CD14-positive monocyte (primary cell): ENCODE measurements at regions of chr18 and their contacts with region 1.

Region 1: DNA sequence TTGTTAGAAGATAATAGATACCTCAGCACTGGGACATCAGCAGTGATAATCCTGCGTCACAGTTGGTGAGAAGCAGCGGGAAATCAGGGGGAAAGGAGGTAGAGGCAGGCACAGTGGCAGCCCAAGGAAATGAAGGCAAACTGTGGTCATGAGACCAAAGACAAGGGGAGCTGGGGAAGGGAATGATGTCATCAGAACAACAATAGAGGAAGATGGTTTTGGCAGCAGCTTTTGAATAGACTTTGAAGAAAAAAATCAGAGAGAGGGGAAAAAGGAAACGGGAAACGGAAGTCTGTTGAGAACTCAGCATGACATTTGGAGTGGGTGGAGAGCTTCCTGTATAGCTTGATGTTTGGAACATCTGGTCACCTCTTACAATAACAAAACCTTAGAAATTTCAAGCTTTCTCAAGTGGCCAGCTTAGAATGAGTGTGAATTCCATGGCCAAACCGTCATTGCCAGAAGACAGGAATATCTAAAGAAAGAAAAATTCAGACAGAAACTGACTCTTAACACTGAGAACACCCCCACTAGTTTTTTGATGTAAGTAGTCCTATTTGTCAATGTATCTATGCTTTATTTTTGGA is 18.4 kb upstream of the YES1 start:
- DNase-seq: peak; percentile 49 to 80 (median 61)
- H3K4me3 ChIP-seq: no peak overlapping the region
- H3K4me3 Mint-ChIP-seq: peak overlapping the region in 1 of 2 donors; percentile 85
- H3K27ac ChIP-seq: no peak overlapping the region
- H3K27ac Mint-ChIP-seq: peak overlapping the region in 1 of 7 donors; percentile 45
- H3K4me1 ChIP-seq: peaks cover 7 to 9% of the 10 kb centered on the region in 2 donors
- H3K4me1 Mint-ChIP-seq: peaks cover 10% of the 10 kb centered on the region
- H3K27me3 ChIP-seq: peaks cover 53 to 83% of the 10 kb centered on the region in 2 donors
- H3K27me3 Mint-ChIP-seq: peaks cover 83 to 89% (median 87%) of the 10 kb centered on the region in 3 donors
- CTCF ChIP-seq: no peak

Region 2: DNA sequence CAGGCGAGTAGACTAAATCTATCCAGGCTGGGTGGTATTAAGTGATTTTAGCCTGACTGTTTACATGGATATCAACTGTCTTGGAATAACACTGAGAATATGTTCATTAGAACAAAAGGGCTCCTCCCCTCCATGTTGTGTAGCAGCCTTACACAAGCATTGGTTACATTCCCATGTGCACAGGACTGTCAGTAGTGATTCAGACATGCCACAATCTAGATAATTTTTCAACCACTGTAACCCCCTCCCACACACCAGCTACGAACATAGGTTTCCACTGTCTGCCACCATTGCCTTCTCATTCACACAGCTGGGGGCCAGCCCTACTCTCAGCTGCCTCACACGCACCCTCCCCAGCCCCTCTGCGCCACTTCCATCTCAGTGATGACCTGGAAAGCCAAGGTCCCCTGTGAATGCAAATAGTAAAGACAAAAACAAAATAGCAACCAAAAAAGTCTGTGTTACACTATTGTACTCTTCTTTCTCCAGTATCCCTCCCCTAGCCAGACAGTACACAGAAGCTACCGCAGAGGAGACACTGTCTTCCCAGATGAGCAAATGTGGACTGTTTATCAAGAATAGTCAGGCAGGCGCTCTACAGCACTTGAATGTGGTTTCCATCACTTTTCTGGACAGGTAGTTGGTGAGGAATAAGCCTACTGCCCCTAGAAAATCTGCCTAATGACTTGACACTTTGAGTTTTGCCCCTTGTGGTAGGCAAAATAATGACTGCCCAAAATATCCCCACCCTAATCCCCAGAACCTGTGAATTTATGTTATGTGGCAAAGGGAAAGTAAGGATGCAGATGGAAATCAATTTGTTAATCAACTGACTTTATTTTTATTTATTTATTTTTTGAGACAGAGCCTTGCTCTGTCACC is 200.9 kb before region 1 on chr18:
- intact Hi-C with region 1: loop called (anchors 5 kb)
- DNase-seq: no peak
- H3K4me3 ChIP-seq: no peak overlapping the region
- H3K4me3 Mint-ChIP-seq: peak overlapping the region in 1 of 2 donors; percentile 26
- H3K27ac ChIP-seq: no peak overlapping the region
- H3K27ac Mint-ChIP-seq: no peak overlapping the region
- H3K4me1 ChIP-seq: no peaks in the 10 kb centered on the region
- H3K4me1 Mint-ChIP-seq: no peaks in the 10 kb centered on the region
- H3K27me3 ChIP-seq: peaks cover 0 to 3% of the 10 kb centered on the region in 2 donors
- H3K27me3 Mint-ChIP-seq: peaks cover 6 to 13% (median 7%) of the 10 kb centered on the region in 3 donors
- CTCF ChIP-seq: peak; percentile 20